ENCODE measurements at regions of chr3 and their contacts with region 1.

Region 1: GRCh38 chr3:111717601-111718000 is 122.5 kb upstream of the ZBED2 start:
- DNase-seq: peak; percentile 61
- H3K4me3 ChIP-seq: no peak overlapping the region; a peak in 1 of 4 replicates
- H3K27ac ChIP-seq: peak overlapping the region in 1 of 2 experiments; percentile 30; a peak in 1 of 4 replicates
- H3K4me1 ChIP-seq: peaks cover 8 to 10% of the 10 kb centered on the region in 2 experiments
- H3K27me3 ChIP-seq: no peaks in the 10 kb centered on the region
- CTCF ChIP-seq: peak; percentile 93
- EP300 ChIP-seq: no peak
- RAD21 ChIP-seq: peak; percentile 95

Region 2: GRCh38 chr3:111691293-111691909 is 26.2 kb before region 1 on chr3:
- CTCF ChIA-PET with region 1: interaction called, 61 read pairs
- POLR2A ChIA-PET with region 1: no interaction called
- DNase-seq: peak; percentile 47
- H3K4me3 ChIP-seq: no peak overlapping the region; a peak in 1 of 4 replicates
- H3K27ac ChIP-seq: peak overlapping the region in 1 of 2 experiments; percentile 75; a peak in 2 of 4 replicates
- H3K4me1 ChIP-seq: peaks cover 3 to 37% of the 10 kb centered on the region in 2 experiments
- H3K27me3 ChIP-seq: no peaks in the 10 kb centered on the region
- CTCF ChIP-seq: peak; percentile 74
- EP300 ChIP-seq: no peak
- RAD21 ChIP-seq: peak; percentile 74

Region 3: DNA sequence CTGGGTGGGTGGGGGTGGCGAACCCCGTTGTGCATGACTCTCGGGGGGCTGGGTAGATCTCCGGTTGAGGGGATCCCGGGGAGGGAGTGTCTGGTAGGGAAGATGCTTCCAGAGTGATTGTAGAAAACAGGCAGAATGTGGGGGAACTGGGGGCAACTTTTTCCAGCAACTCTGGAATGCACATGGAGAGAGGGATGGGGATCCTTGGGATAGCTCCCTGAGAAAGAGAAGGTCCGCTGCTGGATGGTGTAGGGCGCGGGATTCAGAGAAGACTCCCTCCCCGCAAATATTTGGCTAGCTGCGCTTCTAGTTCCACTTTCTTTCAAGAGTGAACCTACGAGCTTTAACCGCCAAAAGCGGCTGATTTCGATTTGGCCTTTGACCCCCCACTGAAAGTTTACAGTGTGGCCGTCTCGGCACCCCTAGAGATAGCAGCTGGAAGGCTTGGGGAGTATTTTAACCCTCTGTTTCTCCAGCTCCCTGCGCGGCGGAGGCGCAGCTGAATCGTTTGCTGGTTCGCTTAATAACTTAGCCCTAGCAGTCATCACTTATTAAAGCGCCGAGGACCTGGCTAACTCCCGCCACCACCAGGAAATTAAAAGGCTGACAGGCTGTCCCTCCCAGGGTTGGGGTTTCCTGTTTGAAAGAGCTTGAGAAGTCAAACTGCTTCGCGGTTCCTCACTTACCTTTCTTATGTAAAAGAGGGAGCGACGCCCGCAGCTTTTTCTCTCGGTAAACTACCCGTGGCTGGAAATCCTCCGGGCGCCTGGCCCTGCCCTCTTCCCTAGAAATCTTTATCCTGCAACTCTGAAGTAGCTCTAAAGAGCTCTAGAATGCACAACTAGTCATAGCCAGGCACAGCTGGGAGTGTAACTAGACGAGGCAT is 142.6 kb after region 1 on chr3:
- CTCF ChIA-PET with region 1: interaction called, 48 read pairs
- POLR2A ChIA-PET with region 1: no interaction called
- DNase-seq: peak; percentile 69
- H3K4me3 ChIP-seq: peak overlapping the region; percentile 82 to 84
- H3K27ac ChIP-seq: peak overlapping the region; percentile 64 to 98; a peak in 3 of 4 replicates
- H3K4me1 ChIP-seq: peaks cover 7 to 21% of the 10 kb centered on the region in 2 experiments
- H3K27me3 ChIP-seq: no peaks in the 10 kb centered on the region
- CTCF ChIP-seq: peak; percentile 61
- EP300 ChIP-seq: peak in 1 of 2 experiments; percentile 30; a peak in 1 of 4 replicates
- RAD21 ChIP-seq: peak; percentile 56

Region 4: GRCh38 chr3:111956995-111957734 is 239.6 kb after region 1 on chr3:
- CTCF ChIA-PET with region 1: interaction called, 21 read pairs
- POLR2A ChIA-PET with region 1: no interaction called
- DNase-seq: no peak
- H3K4me3 ChIP-seq: no peak overlapping the region
- H3K27ac ChIP-seq: no peak overlapping the region
- H3K4me1 ChIP-seq: peaks cover 9 to 10% of the 10 kb centered on the region in 2 experiments; a peak in 3 of 4 replicates
- H3K27me3 ChIP-seq: no peaks in the 10 kb centered on the region
- CTCF ChIP-seq: no peak
- EP300 ChIP-seq: no peak
- RAD21 ChIP-seq: no peak

Region 5: GRCh38 chr3:111978493-111979433 is 261.2 kb after region 1 on chr3 and contains the start of gene ABHD10:
- CTCF ChIA-PET with region 1: interaction called, 255 read pairs
- POLR2A ChIA-PET with region 1: no interaction called
- DNase-seq: peak; percentile 90
- H3K4me3 ChIP-seq: peak within 1 kb of the TSS; percentile 84 to 92
- H3K27ac ChIP-seq: peak within 1 kb of the TSS; percentile 70 to 92
- H3K4me1 ChIP-seq: peaks cover 8 to 12% of the 10 kb centered on the region in 2 experiments; a peak in 3 of 4 replicates
- H3K27me3 ChIP-seq: no peaks in the 10 kb centered on the region
- CTCF ChIP-seq: no peak
- EP300 ChIP-seq: no peak
- RAD21 ChIP-seq: no peak
- polyA plus RNA-seq, gene ABHD10: 14.8 and 18.3 TPM in 2 replicates

Region 6: GRCh38 chr3:111998636-111999483 is 281.3 kb after region 1 on chr3 and contains the start of gene TAGLN3:
- CTCF ChIA-PET with region 1: interaction called, 10 read pairs
- POLR2A ChIA-PET with region 1: interaction called, 3 read pairs
- DNase-seq: peak; percentile 70
- H3K4me3 ChIP-seq: peak within 1 kb of the TSS; percentile 61 to 77
- H3K27ac ChIP-seq: peak within 1 kb of the TSS; percentile 29 to 96
- H3K4me1 ChIP-seq: peaks cover 12 to 33% of the 10 kb centered on the region in 2 experiments; a peak in 3 of 4 replicates
- H3K27me3 ChIP-seq: no peaks in the 10 kb centered on the region
- CTCF ChIP-seq: no peak
- EP300 ChIP-seq: no peak
- RAD21 ChIP-seq: no peak
- polyA plus RNA-seq, gene TAGLN3: 19.6 and 24.2 TPM in 2 replicates

Region 7: DNA sequence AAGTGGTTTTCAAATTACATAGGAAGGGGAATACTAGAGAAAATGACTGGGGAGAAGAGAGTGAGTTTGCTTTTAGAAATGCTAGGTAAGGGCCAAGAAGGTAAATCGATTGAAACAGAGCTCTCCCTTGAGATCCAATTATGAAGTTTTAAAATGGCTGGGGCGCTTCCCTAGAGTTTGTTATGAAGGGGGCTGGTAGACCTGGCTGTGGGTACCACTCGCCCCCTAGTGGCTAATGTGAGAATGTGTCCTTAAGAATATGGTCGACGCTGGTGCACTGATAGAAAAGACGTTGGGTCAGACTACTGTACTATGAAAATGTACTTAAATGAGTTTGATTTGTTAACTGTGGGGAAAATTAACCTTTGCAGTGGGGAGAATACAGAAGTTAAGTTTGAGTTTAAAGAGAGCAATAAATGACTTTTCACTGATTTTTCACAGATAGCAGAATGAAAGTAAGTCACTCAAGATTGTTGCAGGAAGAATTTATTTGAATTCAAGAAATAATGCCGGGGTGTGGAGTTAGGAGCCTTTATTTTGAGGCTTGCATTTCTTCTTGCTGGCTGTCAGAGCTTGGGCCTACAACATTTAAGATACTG is 326.1 kb after region 1 on chr3:
- CTCF ChIA-PET with region 1: interaction called, 29 read pairs
- POLR2A ChIA-PET with region 1: no interaction called
- DNase-seq: peak; percentile 69
- H3K4me3 ChIP-seq: peak overlapping the region in 1 of 2 experiments; percentile 54; a peak in 1 of 4 replicates
- H3K27ac ChIP-seq: no peak overlapping the region
- H3K4me1 ChIP-seq: no peaks in the 10 kb centered on the region
- H3K27me3 ChIP-seq: no peaks in the 10 kb centered on the region
- CTCF ChIP-seq: peak; percentile 96
- EP300 ChIP-seq: no peak
- RAD21 ChIP-seq: peak; percentile 89

Measured in SK-N-SH (cell line).